Activated CD8-positive, alpha-beta T cell treated with anti-CD3 and anti-CD28 coated beads for 36 hours (primary cell): ENCODE measurements at regions of chr10 and their contacts with region 1.

Region 1: DNA sequence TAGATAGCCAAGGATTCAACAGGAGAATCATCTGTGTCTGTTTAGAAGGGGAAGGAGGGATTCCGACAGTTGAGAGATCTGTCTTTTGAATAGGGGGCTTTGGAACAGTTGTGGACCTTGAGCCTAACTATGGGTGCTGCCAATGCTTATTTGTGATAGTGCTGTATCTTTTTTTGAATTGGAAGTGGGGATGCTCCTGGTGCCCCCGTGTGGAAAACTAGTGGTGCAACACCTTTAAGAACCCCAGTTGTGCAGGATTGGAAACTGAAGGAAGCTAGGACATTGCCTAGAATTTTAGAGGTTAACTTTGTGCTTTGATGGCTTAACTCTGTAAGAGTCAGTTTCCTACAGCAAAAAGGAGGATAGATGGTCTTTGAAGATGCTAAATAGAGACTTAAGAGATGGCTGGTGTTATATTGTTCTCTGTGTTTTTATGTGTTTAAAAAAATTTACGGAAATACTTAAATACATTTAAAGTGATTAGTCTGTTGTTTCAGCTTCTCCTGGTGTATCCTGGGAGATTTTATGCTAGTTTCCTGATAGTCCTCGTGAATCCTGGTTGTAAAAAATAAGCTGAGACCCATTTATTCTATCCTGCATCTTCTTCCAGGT is 69.3 kb downstream of the AP3M1 start:
- DNase-seq: peak; percentile 56
- ATAC-seq: peak; percentile 37
- H3K4me3 Mint-ChIP-seq: no peak overlapping the region
- H3K27ac Mint-ChIP-seq: no peak overlapping the region
- H3K4me1 Mint-ChIP-seq: peaks cover 40% of the 10 kb centered on the region
- H3K27me3 Mint-ChIP-seq: no peaks in the 10 kb centered on the region
- CTCF ChIP-seq: peak; percentile 71

Region 2: GRCh38 chr10:73015779-73016420 is 1065.4 kb before region 1 on chr10:
- CTCF ChIA-PET with region 1: no interaction called
- POLR2A ChIA-PET with region 1: no interaction called
- intact Hi-C with region 1: no loop called
- DNase-seq: no peak
- ATAC-seq: no peak
- H3K4me3 Mint-ChIP-seq: no peak overlapping the region
- H3K27ac Mint-ChIP-seq: no peak overlapping the region
- H3K4me1 Mint-ChIP-seq: peaks cover 12% of the 10 kb centered on the region
- H3K27me3 Mint-ChIP-seq: no peaks in the 10 kb centered on the region
- CTCF ChIP-seq: no peak

Region 3: GRCh38 chr10:73892310-73893030 is 188.8 kb before region 1 on chr10:
- CTCF ChIA-PET with region 1: interaction called, 54 read pairs
- POLR2A ChIA-PET with region 1: interaction called, 3 read pairs
- intact Hi-C with region 1: loop called (anchors 5 kb)
- DNase-seq: no peak
- ATAC-seq: no peak
- H3K4me3 Mint-ChIP-seq: no peak overlapping the region
- H3K27ac Mint-ChIP-seq: no peak overlapping the region
- H3K4me1 Mint-ChIP-seq: peaks cover 2% of the 10 kb centered on the region
- H3K27me3 Mint-ChIP-seq: peaks cover 9% of the 10 kb centered on the region
- CTCF ChIP-seq: no peak

Region 4: GRCh38 chr10:73991884-73992245 is 89.4 kb before region 1 on chr10:
- CTCF ChIA-PET with region 1: interaction called, 14 read pairs
- POLR2A ChIA-PET with region 1: no interaction called
- intact Hi-C with region 1: loop called (anchors 5 kb)
- DNase-seq: peak; percentile 88
- ATAC-seq: peak; percentile 99
- H3K4me3 Mint-ChIP-seq: peak overlapping the region; percentile 10
- H3K27ac Mint-ChIP-seq: peak overlapping the region; percentile 67
- H3K4me1 Mint-ChIP-seq: peaks cover 26% of the 10 kb centered on the region
- H3K27me3 Mint-ChIP-seq: no peaks in the 10 kb centered on the region
- CTCF ChIP-seq: no peak

Region 5: GRCh38 chr10:74018241-74018640 is 63.1 kb before region 1 on chr10:
- CTCF ChIA-PET with region 1: no interaction called
- POLR2A ChIA-PET with region 1: no interaction called
- intact Hi-C with region 1: no loop called
- DNase-seq: no peak
- ATAC-seq: no peak
- H3K4me3 Mint-ChIP-seq: no peak overlapping the region
- H3K27ac Mint-ChIP-seq: no peak overlapping the region
- H3K4me1 Mint-ChIP-seq: peaks cover 7% of the 10 kb centered on the region
- H3K27me3 Mint-ChIP-seq: no peaks in the 10 kb centered on the region
- CTCF ChIP-seq: no peak

Region 6: GRCh38 chr10:74049955-74050354 is 31.3 kb before region 1 on chr10:
- CTCF ChIA-PET with region 1: interaction called, 10 read pairs
- POLR2A ChIA-PET with region 1: interaction called, 3 read pairs
- intact Hi-C with region 1: no loop called
- DNase-seq: no peak
- ATAC-seq: no peak
- H3K4me3 Mint-ChIP-seq: no peak overlapping the region
- H3K27ac Mint-ChIP-seq: no peak overlapping the region
- H3K4me1 Mint-ChIP-seq: peaks cover 5% of the 10 kb centered on the region
- H3K27me3 Mint-ChIP-seq: no peaks in the 10 kb centered on the region
- CTCF ChIP-seq: no peak

Region 7: GRCh38 chr10:74103560-74104248 is 22.4 kb after region 1 on chr10:
- CTCF ChIA-PET with region 1: interaction called, 11 read pairs
- POLR2A ChIA-PET with region 1: interaction called, 3 read pairs
- intact Hi-C with region 1: no loop called
- DNase-seq: no peak
- ATAC-seq: peak; percentile 47
- H3K4me3 Mint-ChIP-seq: no peak overlapping the region
- H3K27ac Mint-ChIP-seq: no peak overlapping the region
- H3K4me1 Mint-ChIP-seq: no peaks in the 10 kb centered on the region
- H3K27me3 Mint-ChIP-seq: no peaks in the 10 kb centered on the region
- CTCF ChIP-seq: peak; percentile 32

Region 8: DNA sequence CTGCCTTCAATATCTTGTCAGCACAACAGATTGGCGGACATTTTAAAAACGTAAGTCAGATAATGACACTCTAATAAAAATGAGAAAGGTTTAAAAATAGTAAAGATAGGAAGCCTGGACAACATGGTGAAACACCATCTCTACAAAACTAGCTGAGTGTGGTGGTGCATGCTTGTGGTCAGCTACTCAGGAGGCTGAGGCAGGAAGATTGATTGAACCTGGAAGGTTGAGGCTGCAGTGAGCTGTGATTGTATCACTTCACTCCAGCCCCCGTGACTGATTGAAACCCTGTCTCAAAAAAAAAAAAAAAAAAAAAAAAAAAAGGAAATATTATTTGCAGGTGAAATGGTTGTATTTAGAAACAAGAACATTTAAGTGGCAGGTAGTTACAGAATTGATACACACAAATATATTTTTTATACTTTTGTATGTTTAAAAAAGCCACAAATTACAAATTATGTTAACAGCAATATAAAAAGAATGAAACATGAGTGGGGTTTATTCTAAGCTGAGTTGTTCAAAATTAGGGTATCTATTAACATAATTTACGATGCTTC is 211.7 kb after region 1 on chr10:
- CTCF ChIA-PET with region 1: no interaction called
- POLR2A ChIA-PET with region 1: no interaction called
- intact Hi-C with region 1: no loop called
- DNase-seq: no peak
- ATAC-seq: no peak
- H3K4me3 Mint-ChIP-seq: no peak overlapping the region
- H3K27ac Mint-ChIP-seq: no peak overlapping the region
- H3K4me1 Mint-ChIP-seq: peaks cover 7% of the 10 kb centered on the region
- H3K27me3 Mint-ChIP-seq: no peaks in the 10 kb centered on the region
- CTCF ChIP-seq: no peak